ENCODE measurements at regions of chr14 and their contacts with region 1.

Region 1: DNA sequence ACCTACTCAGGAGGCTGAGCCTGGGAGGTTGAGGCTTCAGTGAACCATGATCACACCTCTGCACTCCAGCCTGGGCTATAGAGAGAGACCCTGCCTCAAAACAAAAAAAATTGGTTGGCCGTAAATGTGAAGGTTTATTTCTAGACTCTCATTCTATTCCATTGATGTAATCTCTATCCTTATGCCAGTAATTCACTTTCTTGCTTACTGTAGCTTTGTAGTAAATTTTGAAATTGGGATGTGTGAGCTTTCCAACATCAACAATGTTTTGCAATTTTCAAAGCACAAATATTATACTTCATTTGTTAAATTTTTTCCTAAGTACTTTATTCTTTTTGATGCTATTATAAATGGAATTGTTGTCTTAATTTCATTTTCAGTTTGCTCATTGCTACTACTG is 24.6 kb downstream of the LIN52 start:
- DNase-seq: no peak
- H3K4me3 ChIP-seq: no peak overlapping the region
- H3K27me3 ChIP-seq: no peaks in the 10 kb centered on the region
- CTCF ChIP-seq: no peak

Region 2: GRCh38 chr14:74240794-74241651 is 131.7 kb after region 1 on chr14:
- CTCF ChIA-PET with region 1: interaction called, 11 read pairs
- POLR2A ChIA-PET with region 1: no interaction called
- DNase-seq: no peak
- H3K4me3 ChIP-seq: no peak overlapping the region
- H3K27me3 ChIP-seq: peaks cover 77% of the 10 kb centered on the region
- CTCF ChIP-seq: no peak